H1 (cell line): ENCODE measurements at regions of chr10 and their contacts with region 1.

Region 1: GRCh38 chr10:92592761-92593618 is at the start of gene KIF11:
- DNase-seq: peak; percentile 80 to 97
- H3K4me3 ChIP-seq: peak within 1 kb of the TSS; percentile 85 to 96 (median 88)
- H3K27ac ChIP-seq: peak within 1 kb of the TSS; percentile 84; the same call in 1 of the 2 replicates
- H3K4me1 ChIP-seq: peaks cover 0 to 4% (median 2%) of the 10 kb centered on the region in 4 experiments; a peak in 3 of 7 replicates
- H3K27me3 ChIP-seq: no peaks in the 10 kb centered on the region
- CTCF ChIP-seq: no peak
- EP300 ChIP-seq: no peak
- POLR2A ChIP-seq: peak; percentile 62 to 87
- RAD21 ChIP-seq: no peak
- total RNA-seq, gene KIF11: 58.7 and 59.2 TPM in 2 replicates

Region 2: DNA sequence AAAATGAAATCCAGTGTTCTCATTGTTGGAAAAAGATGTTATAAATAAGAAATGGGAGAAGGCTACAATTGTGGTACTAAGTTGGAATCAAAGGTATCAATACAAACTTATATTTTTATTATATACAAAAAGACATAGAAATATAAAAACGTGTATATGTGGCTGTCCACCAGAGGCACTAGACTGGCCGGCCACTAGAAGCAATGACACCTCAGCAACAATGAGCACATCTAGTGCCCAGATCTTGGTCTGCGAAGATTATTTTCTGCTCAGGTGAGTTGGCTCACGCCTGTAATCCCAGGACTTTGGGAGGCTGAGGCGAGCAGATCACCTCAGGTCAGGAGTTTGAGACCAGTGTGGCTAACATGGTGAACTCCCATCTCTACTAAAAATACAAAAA is 40.7 kb before region 1 on chr10:
- CTCF ChIA-PET with region 1: no interaction called
- POLR2A ChIA-PET with region 1: no interaction called
- DNase-seq: no peak
- H3K4me3 ChIP-seq: no peak overlapping the region
- H3K27ac ChIP-seq: no peak overlapping the region
- H3K4me1 ChIP-seq: no peaks in the 10 kb centered on the region
- H3K27me3 ChIP-seq: no peaks in the 10 kb centered on the region
- CTCF ChIP-seq: peak; percentile 8 to 26 (median 19); a peak in 2 of 4 replicates
- EP300 ChIP-seq: no peak
- POLR2A ChIP-seq: no peak
- RAD21 ChIP-seq: no peak

Region 3: GRCh38 chr10:92573798-92574547 is 19.0 kb before region 1 on chr10 and contains the start of gene IDE:
- CTCF ChIA-PET with region 1: interaction called, 20 read pairs
- POLR2A ChIA-PET with region 1: interaction called, 34 read pairs
- DNase-seq: peak; percentile 79 to 94
- H3K4me3 ChIP-seq: peak within 1 kb of the TSS; percentile 75 to 84 (median 79)
- H3K27ac ChIP-seq: peak within 1 kb of the TSS; percentile 77; the same call in 1 of the 2 replicates
- H3K4me1 ChIP-seq: peaks cover 2 to 8% (median 3%) of the 10 kb centered on the region in 4 experiments; a peak in 4 of 7 replicates
- H3K27me3 ChIP-seq: no peaks in the 10 kb centered on the region
- CTCF ChIP-seq: peak; percentile 68 to 75 (median 73)
- EP300 ChIP-seq: peak in 1 of 2 experiments; percentile 22; a peak in 1 of 3 replicates
- POLR2A ChIP-seq: peak; percentile 63 to 76
- RAD21 ChIP-seq: peak; percentile 65 to 80
- total RNA-seq, gene IDE: 51.2 and 52.7 TPM in 2 replicates

Region 4: GRCh38 chr10:92629945-92630344 is 37.0 kb after region 1 on chr10:
- CTCF ChIA-PET with region 1: no interaction called
- POLR2A ChIA-PET with region 1: no interaction called
- DNase-seq: no peak
- H3K4me3 ChIP-seq: no peak overlapping the region
- H3K27ac ChIP-seq: no peak overlapping the region
- H3K4me1 ChIP-seq: no peaks in the 10 kb centered on the region
- H3K27me3 ChIP-seq: no peaks in the 10 kb centered on the region
- CTCF ChIP-seq: no peak
- EP300 ChIP-seq: no peak
- POLR2A ChIP-seq: no peak
- RAD21 ChIP-seq: no peak